ENCODE measurements at regions of chr9 and their contacts with region 1.

Region 1: DNA sequence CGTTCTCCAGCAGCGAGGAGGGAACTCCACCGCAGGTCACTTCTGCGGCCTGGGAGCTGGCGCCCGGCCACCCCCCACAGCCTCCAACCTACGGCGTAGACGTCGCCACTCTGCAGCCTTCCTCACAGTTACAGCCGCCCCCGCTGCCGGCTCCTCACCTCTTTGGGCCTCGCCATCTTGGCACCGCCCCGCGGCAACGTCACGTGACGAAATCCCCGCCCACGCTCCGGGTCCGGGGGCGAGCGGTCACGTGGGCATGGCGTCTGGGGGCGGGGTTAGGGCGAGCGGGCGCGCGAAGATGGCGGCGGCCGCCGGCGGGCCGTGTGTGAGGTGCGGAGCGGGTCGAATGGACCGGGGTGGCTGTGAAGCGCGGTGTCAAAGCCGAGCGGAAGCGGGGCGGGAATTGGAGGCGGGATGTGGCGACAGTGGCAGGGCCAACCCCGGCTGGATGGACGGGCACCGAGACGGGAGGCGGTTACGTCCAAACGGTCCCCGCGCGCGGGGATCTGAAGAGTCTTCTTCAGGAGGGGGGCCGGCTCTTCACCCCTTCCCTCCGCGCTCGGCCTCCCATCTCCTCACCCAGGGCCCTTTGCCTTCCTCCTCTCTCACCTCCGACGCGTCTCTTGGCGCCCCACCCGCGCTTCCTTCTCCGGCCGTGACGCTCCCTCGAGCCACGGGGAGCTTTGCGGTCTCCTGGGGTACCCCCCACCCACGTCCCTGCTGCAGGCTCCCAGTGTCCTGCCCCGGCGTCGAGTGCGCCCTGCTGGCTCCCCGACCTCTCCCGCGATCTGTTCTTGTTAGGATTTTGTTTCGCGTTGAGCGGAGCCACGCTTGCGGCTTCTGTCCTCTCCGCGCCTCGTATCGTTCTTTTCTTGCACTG is at the starts of genes DOLK and NUP188:
- DNase-seq: peak; percentile 99
- ATAC-seq: peak; percentile 80
- H3K4me3 Mint-ChIP-seq: peak within 1 kb of the TSS; percentile 89
- H3K27ac Mint-ChIP-seq: peak within 1 kb of the TSS; percentile 95
- H3K4me1 Mint-ChIP-seq: peaks cover 29% of the 10 kb centered on the region
- H3K27me3 Mint-ChIP-seq: no peaks in the 10 kb centered on the region
- total RNA-seq, gene DOLK: 4.8 to 5.0 TPM
- total RNA-seq, gene NUP188: 102 to 124 TPM

Region 2: GRCh38 chr9:128504485-128505413 is 442.9 kb before region 1 on chr9 and contains the start of gene GLE1:
- CTCF ChIA-PET with region 1: no interaction called
- POLR2A ChIA-PET with region 1: no interaction called
- intact Hi-C with region 1: loop called in 1 of 2 experiments (anchors 1 kb)
- DNase-seq: peak; percentile 98
- ATAC-seq: peak; percentile 99
- H3K4me3 Mint-ChIP-seq: peak within 1 kb of the TSS; percentile 95
- H3K27ac Mint-ChIP-seq: peak within 1 kb of the TSS; percentile 99
- H3K4me1 Mint-ChIP-seq: peaks cover 21% of the 10 kb centered on the region
- H3K27me3 Mint-ChIP-seq: no peaks in the 10 kb centered on the region
- total RNA-seq, gene GLE1: 52.5 to 54.4 TPM

Region 3: DNA sequence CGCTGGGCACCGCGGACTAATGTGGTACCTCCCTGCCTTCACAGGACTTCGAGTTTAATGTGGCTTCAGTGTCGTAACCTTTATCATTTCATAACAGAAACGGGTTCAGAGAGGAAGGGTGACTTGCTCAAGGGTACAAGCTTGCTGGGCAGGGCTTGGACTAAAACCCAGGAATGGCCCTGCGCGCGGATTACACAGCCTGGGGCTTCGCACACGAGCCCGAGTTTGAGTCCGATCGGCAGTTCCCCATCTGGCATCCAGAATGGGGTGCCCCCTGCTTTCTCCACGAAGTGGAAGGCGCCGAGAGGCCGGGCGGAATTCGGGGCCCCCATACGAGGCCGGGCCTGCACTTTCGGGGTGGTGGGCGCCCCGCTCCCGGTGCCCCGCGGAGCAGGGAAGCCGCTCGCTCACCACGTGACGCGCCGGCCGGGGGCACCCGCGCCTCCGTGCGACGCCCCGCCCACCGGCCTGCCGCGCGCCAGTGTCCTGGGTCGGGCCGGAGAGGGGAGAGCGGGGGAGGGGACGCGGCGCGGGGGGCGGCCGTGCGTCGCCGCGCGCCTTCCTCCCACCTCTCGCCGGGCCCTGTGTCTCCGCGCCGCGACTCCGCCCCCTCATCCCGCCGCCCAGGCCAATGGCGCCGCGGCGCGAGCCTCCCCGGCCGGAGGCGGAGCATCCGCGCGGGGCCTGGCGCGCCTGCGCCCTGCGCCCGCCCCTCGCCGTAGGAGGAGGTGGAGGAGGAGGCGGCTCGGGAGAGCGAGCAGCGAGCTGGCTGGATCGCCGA is 259.0 kb before region 1 on chr9 and contains the start of gene SET:
- CTCF ChIA-PET with region 1: no interaction called
- POLR2A ChIA-PET with region 1: no interaction called
- intact Hi-C with region 1: loop called (anchors 1 to 5 kb)
- DNase-seq: peak; percentile 96
- ATAC-seq: peak; percentile 71
- H3K4me3 Mint-ChIP-seq: peak within 1 kb of the TSS; percentile 99
- H3K27ac Mint-ChIP-seq: peak within 1 kb of the TSS; percentile 94
- H3K4me1 Mint-ChIP-seq: peaks cover 61% of the 10 kb centered on the region
- H3K27me3 Mint-ChIP-seq: no peaks in the 10 kb centered on the region
- total RNA-seq, gene SET: 673 to 682 TPM

Region 4: DNA sequence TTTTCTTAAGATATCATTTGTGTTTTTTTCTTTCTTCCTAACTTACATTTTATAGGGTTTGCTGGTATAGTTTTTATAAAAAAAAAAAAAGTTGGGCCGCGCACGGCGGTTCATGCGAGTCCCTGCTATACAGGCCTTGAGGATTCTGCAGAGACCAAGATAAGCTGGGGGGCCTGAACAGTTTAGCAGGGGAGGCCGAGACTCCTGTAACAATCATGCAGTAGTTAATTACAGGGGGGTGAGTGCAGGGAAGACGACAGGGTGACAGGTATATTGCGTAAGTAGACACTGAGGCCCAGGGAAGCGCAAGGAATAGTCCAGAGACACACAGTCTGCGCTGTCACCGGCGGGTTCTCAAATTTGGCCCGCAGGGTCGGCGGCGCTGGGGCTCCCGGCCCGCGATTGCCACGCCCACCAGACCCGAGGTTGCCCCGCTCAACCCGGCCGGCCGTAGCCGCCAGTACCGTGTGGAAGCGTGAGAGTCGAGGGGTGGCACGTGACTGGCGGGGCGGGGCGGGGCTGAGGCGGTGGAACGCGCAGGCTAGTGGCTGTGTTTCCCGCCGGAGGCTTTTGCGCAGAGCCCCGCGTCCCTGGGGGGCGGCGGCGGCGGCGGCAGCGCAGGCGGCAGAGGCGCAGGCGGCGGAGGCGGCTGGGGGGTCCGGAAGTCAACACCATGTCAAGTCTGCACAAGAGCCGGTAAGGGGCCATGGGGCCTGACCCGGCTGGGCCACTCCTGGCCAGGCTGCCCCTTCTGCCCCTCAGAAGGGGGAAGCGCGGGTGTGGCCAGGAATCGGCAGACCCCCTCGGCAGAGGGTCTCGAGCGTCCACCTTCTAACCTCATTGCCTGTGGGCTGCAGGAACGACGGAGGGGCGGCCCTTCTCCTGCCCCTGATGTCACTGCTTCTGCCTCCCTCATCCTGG is 160.7 kb before region 1 on chr9 and contains the start of gene TBC1D13:
- CTCF ChIA-PET with region 1: no interaction called
- POLR2A ChIA-PET with region 1: no interaction called
- intact Hi-C with region 1: loop called in 1 of 2 experiments (anchors 1 kb)
- DNase-seq: peak; percentile 94
- ATAC-seq: peak; percentile 97
- H3K4me3 Mint-ChIP-seq: peak within 1 kb of the TSS; percentile 87
- H3K27ac Mint-ChIP-seq: peak within 1 kb of the TSS; percentile 87
- H3K4me1 Mint-ChIP-seq: peaks cover 18% of the 10 kb centered on the region
- H3K27me3 Mint-ChIP-seq: no peaks in the 10 kb centered on the region
- total RNA-seq, gene TBC1D13: 10.5 to 14.0 TPM

Region 5: GRCh38 chr9:128902351-128903078 is 45.1 kb before region 1 on chr9:
- CTCF ChIA-PET with region 1: no interaction called
- POLR2A ChIA-PET with region 1: no interaction called
- intact Hi-C with region 1: loop called in 1 of 2 experiments (anchors 2 kb)
- DNase-seq: peak; percentile 92
- ATAC-seq: peak; percentile 86
- H3K4me3 Mint-ChIP-seq: peak overlapping the region; percentile 21
- H3K27ac Mint-ChIP-seq: peak overlapping the region; percentile 86
- H3K4me1 Mint-ChIP-seq: peaks cover 68% of the 10 kb centered on the region
- H3K27me3 Mint-ChIP-seq: no peaks in the 10 kb centered on the region

Region 6: DNA sequence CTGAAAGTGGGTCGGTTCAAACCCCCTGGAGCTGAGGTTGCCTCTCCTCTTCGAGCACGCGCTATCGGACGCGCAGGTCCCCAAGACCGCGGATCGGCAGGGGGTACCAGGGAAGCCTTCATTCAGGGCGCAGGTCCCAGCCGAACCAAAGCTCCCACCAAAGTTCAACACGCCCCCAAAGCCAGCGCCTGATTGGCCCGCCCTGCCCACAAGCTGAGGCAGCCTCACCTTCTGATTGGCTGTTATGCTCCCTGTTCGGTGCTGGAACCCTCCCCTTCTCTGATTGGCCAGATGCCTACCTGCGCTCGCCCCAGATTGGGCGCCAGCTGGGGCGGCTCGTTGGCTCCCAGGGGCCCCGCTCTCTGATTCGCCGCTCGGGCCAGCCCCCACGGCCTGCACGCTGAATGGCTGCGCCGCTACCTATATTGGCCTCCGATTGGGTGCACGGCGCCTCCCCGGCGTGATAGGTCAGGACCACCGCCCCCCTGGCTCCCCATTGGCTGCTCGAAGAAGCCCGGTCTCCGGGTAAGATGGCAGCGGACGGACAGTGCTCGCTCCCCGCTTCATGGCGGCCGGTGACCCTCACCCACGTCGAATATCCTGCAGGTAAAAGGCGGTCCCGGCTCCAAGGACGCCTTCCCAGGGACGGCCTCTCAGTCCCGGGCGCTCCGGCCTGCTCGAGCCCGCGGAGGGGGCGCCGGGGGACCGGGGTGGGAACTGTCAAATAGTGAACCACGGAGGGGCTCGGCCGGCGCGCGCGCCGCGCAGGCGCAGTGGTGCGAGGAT is 133.1 kb after region 1 on chr9 and contains the start of gene DOLPP1:
- CTCF ChIA-PET with region 1: no interaction called
- POLR2A ChIA-PET with region 1: no interaction called
- intact Hi-C with region 1: loop called in 1 of 2 experiments (anchors 1 kb)
- DNase-seq: peak; percentile 99
- ATAC-seq: peak; percentile 98
- H3K4me3 Mint-ChIP-seq: peak within 1 kb of the TSS; percentile 83
- H3K27ac Mint-ChIP-seq: peak within 1 kb of the TSS; percentile 63
- H3K4me1 Mint-ChIP-seq: peaks cover 20% of the 10 kb centered on the region
- H3K27me3 Mint-ChIP-seq: no peaks in the 10 kb centered on the region
- total RNA-seq, gene DOLPP1: 15.1 to 16.4 TPM